ENCODE measurements at regions of chr9 and their contacts with region 1.

Region 1: DNA sequence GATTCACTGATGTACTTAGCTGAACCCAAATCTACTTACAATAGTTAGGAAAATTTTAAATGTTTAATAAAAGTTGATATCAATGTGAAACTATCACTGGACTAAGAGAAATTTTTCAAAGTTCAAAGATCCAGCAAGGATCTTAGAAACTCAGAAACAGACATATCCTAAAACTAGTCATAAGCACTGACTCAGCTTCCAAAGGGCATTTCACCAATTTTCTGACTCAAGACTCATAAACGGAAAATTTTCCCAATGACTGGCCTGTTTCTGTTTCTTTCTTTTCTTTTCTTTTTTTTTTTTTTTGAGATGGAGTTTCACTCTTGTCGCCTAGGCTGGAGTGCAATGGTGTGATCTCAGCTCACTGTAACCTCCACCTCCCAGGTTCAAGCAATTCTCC is 66.6 kb downstream of the CDC14B start:
- DNase-seq: peak; percentile 51
- H3K4me3 ChIP-seq: no peak overlapping the region
- CTCF ChIP-seq: no peak

Region 2: DNA sequence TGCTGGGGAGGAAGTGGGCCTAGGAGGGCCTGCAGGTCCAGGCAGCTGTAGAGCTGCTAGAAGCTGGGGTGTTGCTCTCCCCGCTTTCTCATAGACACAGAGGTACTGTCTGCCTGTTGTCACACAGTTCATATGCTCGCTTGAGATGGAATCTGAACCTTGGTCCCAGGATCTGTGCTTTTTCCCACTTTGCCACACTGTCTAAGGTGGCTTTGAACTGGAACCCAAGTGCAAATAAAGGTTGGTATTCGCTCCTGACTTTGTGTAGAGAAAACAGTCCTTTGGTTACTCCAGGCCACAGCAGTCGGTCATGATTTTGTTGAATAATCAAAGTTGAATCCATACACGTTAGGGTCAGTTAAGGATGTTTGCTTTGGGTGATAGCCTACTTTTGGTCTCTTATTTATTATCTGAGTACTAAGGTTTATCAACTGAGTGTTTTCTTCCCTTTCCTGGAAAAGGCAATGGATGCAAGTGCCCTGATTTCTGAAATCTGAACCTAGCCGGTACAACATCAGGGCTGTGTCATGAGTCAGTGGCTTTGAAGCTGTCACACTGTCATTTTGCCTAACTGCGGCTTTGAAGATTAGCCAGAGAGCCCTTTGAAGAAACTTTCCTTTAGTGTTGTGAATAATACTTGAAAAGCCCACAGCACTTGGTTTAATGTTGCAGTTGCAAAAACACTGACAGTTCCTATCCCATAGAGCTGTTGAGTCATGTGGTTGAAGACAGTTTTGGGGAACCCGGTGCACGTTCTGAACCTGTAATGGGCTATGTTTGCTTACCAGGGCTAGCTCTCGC is 61.8 kb before region 1 on chr9:
- in situ Hi-C with region 1: no loop called
- DNase-seq: no peak
- H3K4me3 ChIP-seq: no peak overlapping the region
- CTCF ChIP-seq: no peak

Region 3: GRCh38 chr9:96514108-96514799 is 38.8 kb before region 1 on chr9:
- in situ Hi-C with region 1: loop called (anchors 5 kb)
- DNase-seq: peak; percentile 39
- H3K4me3 ChIP-seq: no peak overlapping the region
- CTCF ChIP-seq: no peak

Region 4: DNA sequence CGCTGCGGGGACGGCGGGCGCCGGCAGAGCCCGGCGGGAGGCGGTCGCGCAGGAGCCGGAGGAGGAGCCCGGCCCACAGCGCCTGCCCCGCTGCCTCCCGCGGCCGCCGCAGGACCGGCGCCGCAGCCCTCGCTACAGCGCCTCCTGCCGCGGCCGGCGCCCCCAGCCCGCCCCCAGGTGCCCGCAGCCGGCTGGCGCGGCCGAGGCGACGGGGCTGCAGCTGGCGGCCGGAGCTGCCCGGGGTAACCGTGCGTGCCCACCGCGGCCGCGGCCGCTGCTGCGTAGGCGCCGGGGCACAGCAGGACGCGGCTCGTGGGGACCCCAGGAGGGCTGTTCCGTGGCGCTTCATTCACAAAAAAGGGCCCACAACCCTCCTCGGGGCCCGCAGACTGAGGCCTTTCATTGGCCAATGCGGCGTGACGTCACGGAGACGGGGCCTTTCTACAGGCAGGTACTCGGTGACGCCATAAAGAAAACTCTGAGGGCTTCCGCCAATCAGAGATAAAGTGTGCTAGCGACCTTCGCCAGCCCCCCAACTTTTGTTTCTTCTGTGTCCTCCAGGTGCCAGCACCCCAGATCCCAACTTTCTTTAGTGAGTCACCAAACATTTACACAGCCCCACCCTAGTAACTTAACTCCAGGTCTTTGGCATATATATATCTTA is 66.6 kb after region 1 on chr9 and contains the start of gene CDC14B:
- in situ Hi-C with region 1: no loop called
- DNase-seq: peak; percentile 62
- H3K4me3 ChIP-seq: peak within 1 kb of the TSS; percentile 68
- CTCF ChIP-seq: no peak

Measured in astrocyte of the cerebellum (primary cell).